ENCODE measurements at regions of chr11 and their contacts with region 1.

Region 1: DNA sequence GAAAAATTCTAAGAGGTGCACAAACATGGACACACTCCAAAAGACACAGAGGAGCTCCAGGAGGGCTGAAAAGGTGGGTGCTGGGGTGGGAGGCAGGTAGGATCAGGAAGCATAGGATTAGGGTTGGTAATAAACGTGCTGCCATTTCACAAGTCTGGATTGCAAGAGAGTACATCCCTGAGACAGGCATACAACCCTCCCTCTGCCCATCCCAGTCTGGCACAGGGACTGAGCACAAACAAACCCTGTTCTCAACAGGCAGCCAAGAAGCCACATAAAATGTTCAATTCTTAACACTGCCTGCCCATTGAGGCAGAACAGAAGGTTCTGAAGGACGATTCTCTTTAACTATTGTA is 18.5 kb downstream of the SLC35F2 start:
- DNase-seq: no peak
- ATAC-seq: peak; percentile 51
- H3K4me3 ChIP-seq: peak overlapping the region; percentile 41
- H3K27ac ChIP-seq: peak overlapping the region; percentile 86
- H3K4me1 ChIP-seq: peaks cover 29% of the 10 kb centered on the region
- H3K27me3 ChIP-seq: no peaks in the 10 kb centered on the region
- CTCF ChIP-seq: no peak
- EP300 ChIP-seq: no peak
- POLR2A ChIP-seq: no peak
- RAD21 ChIP-seq: no peak

Region 2: DNA sequence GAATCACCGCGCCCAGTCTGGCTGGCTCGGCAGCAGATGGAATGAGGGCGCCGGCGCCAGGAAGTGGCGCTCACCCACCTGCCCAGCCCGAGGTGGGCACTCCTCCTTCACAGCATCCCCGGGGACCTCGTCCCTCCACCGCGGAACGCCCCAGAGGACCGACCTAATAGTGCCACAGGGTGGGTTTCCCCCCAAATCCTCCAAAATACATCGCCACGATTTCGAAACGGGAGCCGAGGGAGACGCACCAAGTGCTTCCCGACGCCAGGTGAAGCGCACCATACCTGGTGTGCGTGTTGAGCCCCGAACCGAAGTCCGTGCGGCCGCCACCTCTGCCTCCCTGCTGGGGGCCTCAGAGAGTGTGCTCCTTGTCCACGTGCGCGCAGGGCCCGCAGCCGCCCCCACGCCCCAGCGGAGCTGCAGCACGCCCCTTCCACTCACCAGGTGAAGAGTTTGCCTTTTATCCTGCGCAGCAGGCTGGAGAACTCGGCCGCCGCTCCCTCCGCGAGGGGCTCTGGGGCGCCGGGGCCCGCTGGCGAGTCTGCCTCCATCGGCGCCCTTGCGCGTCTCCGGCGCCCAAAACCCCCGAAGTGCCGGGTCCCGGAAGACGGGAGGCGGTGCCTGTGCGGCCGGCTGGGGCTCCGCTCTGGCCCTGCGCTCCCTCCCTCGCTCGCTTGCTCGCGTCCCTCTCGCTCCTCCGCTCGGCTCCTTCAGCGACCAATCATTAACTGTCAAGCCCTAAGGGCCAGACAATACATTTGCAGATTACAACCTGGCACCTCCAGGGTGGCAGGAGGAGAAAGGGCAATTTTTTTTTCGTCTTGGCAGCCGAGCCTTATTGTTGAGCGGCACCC is 18.3 kb after region 1 on chr11 and contains the start of gene SLC35F2:
- CTCF ChIA-PET with region 1: interaction called, 5 read pairs
- POLR2A ChIA-PET with region 1: interaction called, 28 read pairs
- RAD21 ChIA-PET with region 1: interaction called, 19 read pairs
- SMC1A ChIA-PET with region 1: interaction called, 23 read pairs
- in situ Hi-C with region 1: no loop called
- intact Hi-C with region 1: loop called (anchors 1 kb)
- DNase-seq: peak; percentile 80
- ATAC-seq: peak; percentile 92
- H3K4me3 ChIP-seq: peak within 1 kb of the TSS; percentile 93
- H3K27ac ChIP-seq: peak within 1 kb of the TSS; percentile 66
- H3K4me1 ChIP-seq: peaks cover 11% of the 10 kb centered on the region; the same call in 1 of the 2 replicates
- H3K27me3 ChIP-seq: no peaks in the 10 kb centered on the region
- CTCF ChIP-seq: peak in 2 of 3 experiments; percentile 12 to 19; a peak in 3 of 6 replicates
- EP300 ChIP-seq: no peak
- POLR2A ChIP-seq: peak; percentile 90
- RAD21 ChIP-seq: no peak
- polyA plus RNA-seq, gene SLC35F2: 15.2 to 25.8 TPM

Region 3: GRCh38 chr11:107864591-107864990 is 24.5 kb after region 1 on chr11:
- CTCF ChIA-PET with region 1: interaction called, 7 read pairs
- POLR2A ChIA-PET with region 1: interaction called, 28 read pairs
- RAD21 ChIA-PET with region 1: interaction called, 15 read pairs
- SMC1A ChIA-PET with region 1: interaction called, 23 read pairs
- in situ Hi-C with region 1: no loop called
- intact Hi-C with region 1: no loop called
- DNase-seq: no peak
- ATAC-seq: no peak; the same call in 2 of the 3 replicates
- H3K4me3 ChIP-seq: no peak overlapping the region
- H3K27ac ChIP-seq: peak overlapping the region; percentile 29; the same call in 1 of the 2 replicates
- H3K4me1 ChIP-seq: peaks cover 16% of the 10 kb centered on the region
- H3K27me3 ChIP-seq: no peaks in the 10 kb centered on the region
- CTCF ChIP-seq: no peak
- EP300 ChIP-seq: no peak
- POLR2A ChIP-seq: no peak
- RAD21 ChIP-seq: no peak

Region 4: GRCh38 chr11:108727665-108728064 is 887.6 kb after region 1 on chr11:
- CTCF ChIA-PET with region 1: no interaction called
- POLR2A ChIA-PET with region 1: no interaction called
- RAD21 ChIA-PET with region 1: no interaction called
- SMC1A ChIA-PET with region 1: no interaction called
- in situ Hi-C with region 1: no loop called
- intact Hi-C with region 1: loop called (anchors 5 kb)
- DNase-seq: no peak
- ATAC-seq: peak; percentile 67
- H3K4me3 ChIP-seq: peak overlapping the region; percentile 43
- H3K27ac ChIP-seq: peak overlapping the region; percentile 86
- H3K4me1 ChIP-seq: peaks cover 11% of the 10 kb centered on the region; the same call in 1 of the 2 replicates
- H3K27me3 ChIP-seq: no peaks in the 10 kb centered on the region
- CTCF ChIP-seq: no peak
- EP300 ChIP-seq: no peak
- POLR2A ChIP-seq: no peak
- RAD21 ChIP-seq: 0 out of 2 replicates have a peak, but pooled peaks have one; percentile 5